Common myeloid progenitor, CD34-positive (primary cell): ENCODE measurements at regions of chr4 and their contacts with region 1.

Region 1: GRCh38 chr4:146342600-146343192 is 128.4 kb downstream of the REELD1 start:
- DNase-seq: peak; percentile 48 to 75 (median 66)
- H3K4me3 ChIP-seq: no peak overlapping the region
- H3K27ac ChIP-seq: no peak overlapping the region
- H3K4me1 ChIP-seq: no peaks in the 10 kb centered on the region
- H3K27me3 ChIP-seq: no peaks in the 10 kb centered on the region

Region 2: DNA sequence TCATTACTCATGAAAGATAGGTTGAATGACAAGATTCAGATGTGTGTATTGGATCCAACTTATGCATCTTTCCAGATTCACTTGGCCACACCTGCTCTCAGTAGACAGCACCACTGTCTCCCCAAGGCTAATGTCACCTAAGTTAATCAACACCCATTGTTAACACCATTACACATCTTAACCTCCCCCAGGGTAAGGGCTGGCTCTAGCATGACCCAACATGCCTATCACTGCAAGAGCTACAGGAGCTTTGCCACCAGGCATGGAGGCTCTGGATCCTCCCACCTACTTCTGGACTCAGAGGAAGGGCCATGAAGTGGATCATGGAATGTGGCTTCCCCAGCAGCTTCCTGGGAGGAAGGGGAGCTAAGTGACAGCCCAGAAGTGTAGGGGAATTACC is 199.9 kb before region 1 on chr4:
- CTCF ChIA-PET with region 1: no interaction called
- POLR2A ChIA-PET with region 1: no interaction called
- DNase-seq: no peak
- H3K4me3 ChIP-seq: no peak overlapping the region
- H3K27ac ChIP-seq: no peak overlapping the region
- H3K4me1 ChIP-seq: no peaks in the 10 kb centered on the region
- H3K27me3 ChIP-seq: peaks cover 0 to 2% (median 0%) of the 10 kb centered on the region in 5 experiments

Region 3: DNA sequence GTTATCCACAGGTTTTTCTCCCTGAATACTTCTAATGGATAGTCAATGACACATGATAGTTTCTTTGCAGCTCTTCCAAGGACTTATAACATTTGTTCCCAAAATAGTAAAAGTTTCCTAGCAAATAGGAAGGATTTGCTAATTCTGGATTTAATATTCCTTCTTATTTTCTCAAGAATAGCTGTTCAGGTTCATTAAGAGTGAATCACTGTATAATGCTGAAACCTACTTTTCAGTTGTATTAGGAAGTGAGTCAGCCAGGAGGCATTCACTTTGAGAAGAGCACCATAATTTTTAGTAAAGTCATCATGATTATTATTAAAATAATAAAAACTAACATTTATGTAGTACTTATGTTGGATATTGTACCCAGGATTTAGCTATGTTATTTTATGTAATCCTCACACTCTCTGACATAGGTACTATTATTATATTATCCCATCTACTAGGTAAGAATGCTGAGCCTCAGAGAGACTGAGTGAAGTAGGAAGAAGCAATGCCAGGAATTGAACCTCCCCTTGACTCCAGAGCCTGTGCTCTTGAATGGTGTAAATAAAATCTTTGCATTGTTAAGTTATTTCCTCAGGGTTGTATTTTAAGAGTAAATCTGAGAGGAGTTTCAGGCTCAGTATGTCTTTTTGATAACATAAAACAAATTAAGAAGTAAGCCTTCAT is 13.5 kb before region 1 on chr4:
- CTCF ChIA-PET with region 1: no interaction called
- POLR2A ChIA-PET with region 1: no interaction called
- DNase-seq: no peak
- H3K4me3 ChIP-seq: no peak overlapping the region
- H3K27ac ChIP-seq: no peak overlapping the region
- H3K4me1 ChIP-seq: no peaks in the 10 kb centered on the region
- H3K27me3 ChIP-seq: no peaks in the 10 kb centered on the region

Region 4: DNA sequence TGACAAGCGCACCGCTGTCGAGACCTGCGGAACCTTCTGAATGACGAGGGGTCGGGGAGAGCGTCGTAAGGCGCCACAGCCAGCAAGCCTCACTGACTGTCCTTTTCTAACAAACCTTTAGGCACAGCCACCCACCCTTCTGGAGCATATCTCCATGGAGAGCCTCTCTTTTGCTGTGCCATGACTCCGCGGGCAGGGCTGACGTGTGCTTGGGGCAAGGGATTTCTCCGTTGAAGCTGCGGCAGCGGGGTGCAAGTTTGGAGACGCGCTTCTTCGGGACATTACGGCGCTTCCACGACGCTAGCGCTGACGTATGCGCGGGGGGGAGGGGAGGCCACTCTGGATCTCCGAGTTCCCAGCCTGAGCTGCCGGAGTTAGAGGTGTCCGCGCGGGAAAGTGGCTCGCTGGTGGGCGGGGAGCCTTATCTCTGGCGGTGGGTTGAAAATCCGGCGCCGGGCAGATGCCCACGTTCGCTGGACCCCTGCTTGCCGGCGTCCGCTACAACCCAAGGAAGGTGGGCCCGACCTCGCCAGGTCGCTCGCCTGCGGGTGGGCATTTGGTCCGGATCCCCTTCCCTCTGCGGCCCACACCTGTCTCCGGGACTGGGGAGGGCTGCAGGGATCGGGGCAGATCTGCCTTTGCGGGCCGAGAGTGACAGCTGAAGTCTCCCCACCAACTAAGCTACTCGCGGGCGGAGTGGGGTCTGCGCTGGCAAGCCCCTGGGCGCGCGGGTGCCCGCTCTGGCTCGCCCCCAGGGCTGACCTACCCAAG is 179.6 kb after region 1 on chr4:
- CTCF ChIA-PET with region 1: no interaction called
- POLR2A ChIA-PET with region 1: no interaction called
- DNase-seq: peak; percentile 82 to 90 (median 90)
- H3K4me3 ChIP-seq: peak overlapping the region; percentile 76 to 99 (median 94)
- H3K27ac ChIP-seq: peak overlapping the region; percentile 77 to 93
- H3K4me1 ChIP-seq: peaks cover 3 to 27% (median 21%) of the 10 kb centered on the region in 4 experiments
- H3K27me3 ChIP-seq: no peaks in the 10 kb centered on the region

Region 5: DNA sequence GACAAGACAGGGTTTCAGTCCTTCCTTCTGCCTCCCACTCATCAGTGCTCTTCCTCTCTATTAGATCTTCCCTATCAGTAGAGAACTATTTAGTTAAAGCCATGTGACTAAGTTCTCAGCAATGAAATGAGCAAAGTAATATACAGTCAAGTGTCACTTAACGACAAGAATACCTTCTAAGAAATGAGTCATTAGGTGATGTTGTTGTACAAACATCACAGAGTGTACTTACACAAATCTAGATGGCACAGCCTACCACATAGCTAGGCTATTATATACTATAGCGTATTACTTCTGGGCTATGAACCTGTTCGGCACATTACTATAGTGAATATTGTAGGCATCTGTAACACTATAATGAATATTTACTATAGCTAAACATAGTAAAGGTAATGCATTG is 367.3 kb after region 1 on chr4:
- CTCF ChIA-PET with region 1: no interaction called
- POLR2A ChIA-PET with region 1: no interaction called
- DNase-seq: no peak
- H3K4me3 ChIP-seq: no peak overlapping the region
- H3K27ac ChIP-seq: no peak overlapping the region
- H3K4me1 ChIP-seq: no peaks in the 10 kb centered on the region
- H3K27me3 ChIP-seq: no peaks in the 10 kb centered on the region

Region 6: DNA sequence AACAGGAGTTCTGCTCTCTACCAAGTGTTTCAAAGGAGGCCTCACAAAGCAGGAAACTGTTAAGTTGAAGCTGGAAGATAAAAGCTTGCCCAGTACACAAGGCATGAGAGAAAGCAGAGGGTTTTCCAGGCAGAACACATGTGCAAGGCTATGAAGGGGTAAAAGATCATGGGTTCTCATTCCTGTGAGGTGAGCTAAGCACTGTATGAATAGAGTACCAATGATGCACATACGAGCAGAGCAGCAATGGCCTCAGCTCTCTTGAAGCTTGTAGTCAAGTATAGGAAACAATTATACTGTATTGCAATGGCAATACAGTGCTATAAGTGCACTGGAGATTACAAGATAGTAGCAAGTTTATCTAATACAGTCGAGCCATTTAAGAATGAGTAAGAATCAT is 585.0 kb after region 1 on chr4:
- CTCF ChIA-PET with region 1: interaction called, 12 read pairs
- POLR2A ChIA-PET with region 1: no interaction called
- DNase-seq: no peak
- H3K4me3 ChIP-seq: no peak overlapping the region
- H3K27ac ChIP-seq: no peak overlapping the region
- H3K4me1 ChIP-seq: peaks cover 0 to 19% (median 12%) of the 10 kb centered on the region in 4 experiments
- H3K27me3 ChIP-seq: peaks cover 0 to 2% (median 0%) of the 10 kb centered on the region in 5 experiments